Right cardiac atrium (tissue), 5 donors: ENCODE measurements at regions of chr6 and their contacts with region 1.

Region 1: GRCh38 chr6:35601331-35602132 is 87.2 kb downstream of the FKBP5 start:
- DNase-seq: peak in 2 of 3 donors; percentile 53 to 72
- ATAC-seq: peak; percentile 88 to 92
- H3K4me3 ChIP-seq: peak overlapping the region; percentile 12
- H3K27ac ChIP-seq: peak overlapping the region; percentile 100
- H3K4me1 ChIP-seq: peaks cover 23% of the 10 kb centered on the region
- H3K27me3 ChIP-seq: no peaks in the 10 kb centered on the region

Region 2: GRCh38 chr6:34476447-34476846 is 1125.1 kb before region 1 on chr6:
- intact Hi-C with region 1: no loop called
- DNase-seq: peak in 1 of 3 donors; percentile 46
- ATAC-seq: no peak
- H3K4me3 ChIP-seq: no peak overlapping the region
- H3K27ac ChIP-seq: no peak overlapping the region
- H3K4me1 ChIP-seq: no peaks in the 10 kb centered on the region
- H3K27me3 ChIP-seq: no peaks in the 10 kb centered on the region

Region 3: GRCh38 chr6:35731736-35732532 is 130.4 kb after region 1 on chr6:
- intact Hi-C with region 1: loop called in 1 of 4 experiments (anchors 5 kb)
- DNase-seq: peak; percentile 98 to 99 (median 98)
- ATAC-seq: peak; percentile 79 to 81
- H3K4me3 ChIP-seq: peak overlapping the region; percentile 67
- H3K27ac ChIP-seq: peak overlapping the region; percentile 100
- H3K4me1 ChIP-seq: peaks cover 27% of the 10 kb centered on the region
- H3K27me3 ChIP-seq: no peaks in the 10 kb centered on the region